ENCODE measurements at regions of chr21 and their contacts with region 1.

Region 1: GRCh38 chr21:31088315-31088714 is 50.0 kb upstream of the KRTAP19-8 start:
- DNase-seq: no peak
- H3K4me3 ChIP-seq: no peak overlapping the region
- H3K27ac ChIP-seq: no peak overlapping the region
- H3K4me1 ChIP-seq: peaks cover 4% of the 10 kb centered on the region
- H3K27me3 ChIP-seq: peaks cover 35% of the 10 kb centered on the region
- CTCF ChIP-seq: no peak

Region 2: DNA sequence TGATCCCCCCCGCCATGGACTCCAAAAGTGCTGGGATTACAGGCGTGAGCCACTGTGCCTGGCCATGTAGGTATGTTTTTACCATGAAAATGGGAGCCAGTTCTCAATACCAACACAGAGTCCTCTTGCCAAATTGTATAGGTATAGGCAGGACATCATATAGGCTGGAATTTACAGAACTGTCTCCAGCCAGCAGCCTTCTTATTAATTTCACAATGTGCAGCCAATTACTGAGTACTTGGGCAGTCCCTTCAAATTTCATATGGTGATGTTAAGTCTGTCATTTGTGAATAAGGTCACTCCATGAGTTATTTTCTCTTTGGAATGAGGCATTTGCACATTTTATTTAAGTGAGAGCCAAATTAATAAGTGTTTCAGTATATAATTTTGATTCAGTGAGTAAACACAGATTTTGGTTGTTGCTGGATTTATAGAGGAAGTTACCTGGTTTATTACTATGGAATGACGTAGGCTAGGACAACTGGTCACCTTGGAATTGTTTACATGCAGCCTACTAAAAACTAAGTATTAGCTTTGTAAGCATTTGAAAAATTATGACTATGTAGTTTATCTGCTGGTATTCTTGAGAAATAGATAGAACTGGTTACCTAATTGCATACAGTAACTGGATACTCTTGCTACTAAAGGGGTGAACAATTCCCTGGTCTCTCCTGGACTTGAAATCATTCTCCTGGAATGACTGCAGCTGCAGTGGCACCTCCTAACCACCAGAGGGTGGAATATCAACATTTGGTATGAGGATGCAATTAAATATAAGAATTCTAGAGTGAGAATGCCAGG is 747.7 kb before region 1 on chr21:
- intact Hi-C with region 1: loop called (anchors 10 kb)
- DNase-seq: no peak
- H3K4me3 ChIP-seq: no peak overlapping the region
- H3K27ac ChIP-seq: no peak overlapping the region
- H3K4me1 ChIP-seq: no peaks in the 10 kb centered on the region
- H3K27me3 ChIP-seq: no peaks in the 10 kb centered on the region
- CTCF ChIP-seq: peak; percentile 86

Region 3: GRCh38 chr21:30831194-30831765 is 257.0 kb before region 1 on chr21:
- intact Hi-C with region 1: loop called (anchors 10 kb)
- DNase-seq: no peak
- H3K4me3 ChIP-seq: no peak overlapping the region
- H3K27ac ChIP-seq: no peak overlapping the region
- H3K4me1 ChIP-seq: no peaks in the 10 kb centered on the region
- H3K27me3 ChIP-seq: no peaks in the 10 kb centered on the region
- CTCF ChIP-seq: peak; percentile 53